CD4-positive, alpha-beta T cell (primary cell): ENCODE measurements at regions of chr13 and their contacts with region 1.

Region 1: GRCh38 chr13:27171827-27172494 is 350 bp upstream of the USP12 start:
- DNase-seq: peak; percentile 81 to 97 (median 92)
- ATAC-seq: peak; percentile 83
- H3K4me3 ChIP-seq: peak overlapping the region; percentile 73
- H3K4me3 Mint-ChIP-seq: peak overlapping the region; percentile 87
- H3K27ac ChIP-seq: peak overlapping the region; percentile 89
- H3K27ac Mint-ChIP-seq: peak overlapping the region; percentile 91
- H3K4me1 ChIP-seq: peaks cover 36% of the 10 kb centered on the region
- H3K4me1 Mint-ChIP-seq: peaks cover 45% of the 10 kb centered on the region
- H3K27me3 ChIP-seq: no peaks in the 10 kb centered on the region
- H3K27me3 Mint-ChIP-seq: no peaks in the 10 kb centered on the region
- CTCF ChIP-seq: peak; percentile 16

Region 2: DNA sequence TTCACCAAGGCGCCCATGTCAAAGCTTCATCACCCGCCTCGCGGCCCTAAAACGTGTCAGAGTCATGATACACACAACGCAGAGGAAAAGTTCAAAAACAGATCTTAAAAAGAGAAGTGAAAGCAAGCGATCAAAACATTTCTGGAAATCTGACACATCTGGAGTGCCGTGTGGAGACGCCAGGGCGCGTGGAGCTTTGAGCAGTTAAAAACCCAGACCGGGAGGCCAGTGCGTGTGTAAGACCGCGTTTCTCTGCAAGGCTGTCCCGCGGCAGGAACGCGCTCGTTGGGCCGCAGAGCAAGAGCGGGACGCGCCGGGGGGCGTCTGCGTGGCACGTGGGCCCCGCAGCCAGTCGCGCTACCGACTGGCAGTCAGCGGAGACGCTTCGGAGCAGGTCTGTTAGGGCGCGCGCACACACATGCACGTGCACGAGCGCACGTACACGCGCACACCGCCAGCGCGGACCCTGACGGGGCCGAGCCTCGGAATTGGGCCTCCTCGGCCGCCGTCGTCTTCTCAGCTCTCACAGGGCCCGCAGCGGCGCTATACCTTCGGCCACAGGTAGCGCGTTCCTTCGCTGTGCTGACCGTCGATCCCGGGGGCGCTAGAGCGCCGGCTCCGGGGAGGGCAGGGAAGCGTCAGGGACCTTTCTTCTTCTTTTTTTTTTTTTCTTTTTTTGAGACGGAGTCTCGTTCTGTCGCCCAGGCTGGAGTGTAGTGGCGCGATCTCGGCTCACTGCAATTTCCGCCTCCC is 985.7 kb before region 1 on chr13:
- CTCF ChIA-PET with region 1: no interaction called
- POLR2A ChIA-PET with region 1: no interaction called
- intact Hi-C with region 1: loop called in 1 of 2 experiments (anchors 10 kb)
- DNase-seq: peak; percentile 83 to 97 (median 88)
- ATAC-seq: peak; percentile 83
- H3K4me3 ChIP-seq: peak overlapping the region; percentile 88
- H3K4me3 Mint-ChIP-seq: peak overlapping the region; percentile 87
- H3K27ac ChIP-seq: peak overlapping the region; percentile 55 to 60
- H3K27ac Mint-ChIP-seq: peak overlapping the region; percentile 92
- H3K4me1 ChIP-seq: peaks cover 26% of the 10 kb centered on the region
- H3K4me1 Mint-ChIP-seq: peaks cover 23% of the 10 kb centered on the region
- H3K27me3 ChIP-seq: no peaks in the 10 kb centered on the region
- H3K27me3 Mint-ChIP-seq: no peaks in the 10 kb centered on the region
- CTCF ChIP-seq: peak; percentile 40

Region 3: GRCh38 chr13:27006519-27007161 is 165.3 kb before region 1 on chr13:
- CTCF ChIA-PET with region 1: no interaction called
- POLR2A ChIA-PET with region 1: no interaction called
- intact Hi-C with region 1: no loop called
- DNase-seq: no peak
- ATAC-seq: no peak
- H3K4me3 ChIP-seq: no peak overlapping the region
- H3K4me3 Mint-ChIP-seq: no peak overlapping the region
- H3K27ac ChIP-seq: no peak overlapping the region
- H3K27ac Mint-ChIP-seq: no peak overlapping the region
- H3K4me1 ChIP-seq: peaks cover 3% of the 10 kb centered on the region
- H3K4me1 Mint-ChIP-seq: no peaks in the 10 kb centered on the region
- H3K27me3 ChIP-seq: peaks cover 20 to 26% of the 10 kb centered on the region in 2 experiments
- H3K27me3 Mint-ChIP-seq: peaks cover 65% of the 10 kb centered on the region
- CTCF ChIP-seq: no peak

Region 4: DNA sequence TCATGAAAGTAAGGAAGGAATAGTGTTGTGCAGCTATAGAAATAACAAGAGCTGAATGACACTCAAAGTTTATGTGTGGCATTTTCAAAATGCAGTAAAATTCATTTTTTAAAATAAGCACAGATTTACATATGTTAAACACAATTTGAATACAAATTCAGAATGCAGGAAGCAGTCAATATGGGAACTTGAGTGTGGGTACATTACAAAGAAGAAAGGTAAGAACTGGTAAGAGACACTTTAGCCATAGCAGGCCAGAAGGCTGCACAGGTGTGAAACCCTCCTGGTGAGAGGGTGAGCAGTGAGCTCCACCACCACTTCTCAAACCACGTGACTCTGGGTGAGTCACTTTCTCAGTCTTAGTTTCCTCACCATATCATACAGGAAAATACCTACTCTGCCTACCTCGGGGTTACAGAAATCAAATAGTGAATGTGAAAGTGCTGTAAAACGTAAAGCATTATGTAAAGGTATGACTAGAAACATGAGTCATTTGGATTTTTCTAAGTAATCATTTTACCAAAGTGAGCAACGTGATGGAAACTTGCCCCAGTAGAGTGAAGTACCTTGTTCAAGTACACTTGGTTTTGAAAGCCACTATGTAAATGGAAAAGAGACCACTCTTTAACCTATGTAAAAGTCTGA is 40.9 kb before region 1 on chr13:
- CTCF ChIA-PET with region 1: no interaction called
- POLR2A ChIA-PET with region 1: interaction called, 3 read pairs
- intact Hi-C with region 1: loop called in 1 of 2 experiments (anchors 5 kb)
- DNase-seq: peak in 13 of 14 experiments; percentile 15 to 87 (median 45)
- ATAC-seq: peak; percentile 89
- H3K4me3 ChIP-seq: no peak overlapping the region
- H3K4me3 Mint-ChIP-seq: peak overlapping the region; percentile 53
- H3K27ac ChIP-seq: peak overlapping the region in 1 of 2 donors; percentile 60
- H3K27ac Mint-ChIP-seq: peak overlapping the region; percentile 72
- H3K4me1 ChIP-seq: peaks cover 27% of the 10 kb centered on the region
- H3K4me1 Mint-ChIP-seq: peaks cover 82% of the 10 kb centered on the region
- H3K27me3 ChIP-seq: no peaks in the 10 kb centered on the region
- H3K27me3 Mint-ChIP-seq: no peaks in the 10 kb centered on the region
- CTCF ChIP-seq: no peak

Region 5: DNA sequence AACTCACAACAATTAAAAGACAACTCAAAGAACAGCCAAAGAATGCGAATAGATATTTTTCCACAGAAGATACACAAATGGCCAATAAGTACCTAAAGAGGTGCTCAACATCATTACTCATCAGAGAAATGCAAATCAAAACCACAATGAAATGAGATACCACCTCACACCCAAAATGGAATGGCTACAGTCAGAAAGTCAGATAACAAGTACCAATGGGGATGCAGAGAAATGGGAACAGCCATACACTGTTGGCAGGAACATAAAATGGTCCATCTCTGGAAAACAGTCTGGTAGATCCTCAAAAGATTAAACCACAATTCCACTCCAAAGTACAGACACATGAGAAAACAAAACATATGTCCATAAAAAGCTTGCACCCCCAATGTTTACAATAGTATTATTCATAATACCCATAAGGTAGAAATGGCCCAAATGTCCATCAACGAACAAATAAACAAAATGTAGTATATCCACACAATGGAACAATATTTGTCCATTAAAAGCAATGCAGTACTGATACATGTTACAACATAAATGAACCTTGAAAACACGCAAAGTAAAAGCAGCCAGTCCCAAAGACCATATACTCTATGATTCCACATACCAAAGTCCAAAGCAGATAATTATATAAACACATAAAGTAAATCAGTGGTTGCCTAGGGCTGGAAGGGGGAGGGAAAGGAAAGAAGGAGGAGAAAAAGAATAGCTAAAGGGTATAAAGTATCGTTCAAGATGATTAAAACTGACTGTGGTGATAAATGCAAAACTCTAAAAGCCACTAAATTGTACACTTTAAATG is 20.0 kb before region 1 on chr13:
- CTCF ChIA-PET with region 1: no interaction called
- POLR2A ChIA-PET with region 1: no interaction called
- intact Hi-C with region 1: no loop called
- DNase-seq: no peak
- ATAC-seq: no peak
- H3K4me3 ChIP-seq: no peak overlapping the region
- H3K4me3 Mint-ChIP-seq: peak overlapping the region; percentile 28
- H3K27ac ChIP-seq: no peak overlapping the region
- H3K27ac Mint-ChIP-seq: no peak overlapping the region
- H3K4me1 ChIP-seq: peaks cover 8% of the 10 kb centered on the region
- H3K4me1 Mint-ChIP-seq: peaks cover 73% of the 10 kb centered on the region
- H3K27me3 ChIP-seq: no peaks in the 10 kb centered on the region
- H3K27me3 Mint-ChIP-seq: no peaks in the 10 kb centered on the region
- CTCF ChIP-seq: no peak

Region 6: GRCh38 chr13:27362064-27362883 is 190.3 kb after region 1 on chr13:
- CTCF ChIA-PET with region 1: no interaction called
- POLR2A ChIA-PET with region 1: interaction called, 3 read pairs
- intact Hi-C with region 1: loop called (anchors 5 to 10 kb)
- DNase-seq: peak; percentile 58 to 86 (median 70)
- ATAC-seq: peak; percentile 90
- H3K4me3 ChIP-seq: peak overlapping the region; percentile 33
- H3K4me3 Mint-ChIP-seq: peak overlapping the region; percentile 58
- H3K27ac ChIP-seq: no peak overlapping the region
- H3K27ac Mint-ChIP-seq: no peak overlapping the region
- H3K4me1 ChIP-seq: peaks cover 10% of the 10 kb centered on the region
- H3K4me1 Mint-ChIP-seq: peaks cover 4% of the 10 kb centered on the region
- H3K27me3 ChIP-seq: peaks cover 6 to 20% of the 10 kb centered on the region in 2 experiments
- H3K27me3 Mint-ChIP-seq: peaks cover 38% of the 10 kb centered on the region
- CTCF ChIP-seq: peak; percentile 86

Region 7: GRCh38 chr13:27620377-27621115 is 448.6 kb after region 1 on chr13 and contains the start of gene LNX2:
- CTCF ChIA-PET with region 1: no interaction called
- POLR2A ChIA-PET with region 1: interaction called, 5 read pairs
- intact Hi-C with region 1: loop called in 1 of 2 experiments (anchors 5 kb)
- DNase-seq: peak; percentile 92 to 98 (median 96)
- ATAC-seq: peak; percentile 83
- H3K4me3 ChIP-seq: peak within 1 kb of the TSS; percentile 77
- H3K4me3 Mint-ChIP-seq: peak within 1 kb of the TSS; percentile 98
- H3K27ac ChIP-seq: peak within 1 kb of the TSS; percentile 97 to 98
- H3K27ac Mint-ChIP-seq: peak within 1 kb of the TSS; percentile 99
- H3K4me1 ChIP-seq: peaks cover 40% of the 10 kb centered on the region
- H3K4me1 Mint-ChIP-seq: peaks cover 72% of the 10 kb centered on the region
- H3K27me3 ChIP-seq: no peaks in the 10 kb centered on the region
- H3K27me3 Mint-ChIP-seq: no peaks in the 10 kb centered on the region
- CTCF ChIP-seq: no peak
- total RNA-seq, gene LNX2: 3.5 to 3.9 TPM

Region 8: GRCh38 chr13:28718543-28719226 is 1546.7 kb after region 1 on chr13 and contains the start of gene SLC46A3:
- CTCF ChIA-PET with region 1: no interaction called
- POLR2A ChIA-PET with region 1: no interaction called
- intact Hi-C with region 1: loop called in 1 of 2 experiments (anchors 10 kb)
- DNase-seq: peak; percentile 94 to 98 (median 97)
- ATAC-seq: peak; percentile 98
- H3K4me3 ChIP-seq: peak within 1 kb of the TSS; percentile 95
- H3K4me3 Mint-ChIP-seq: peak within 1 kb of the TSS; percentile 94
- H3K27ac ChIP-seq: peak within 1 kb of the TSS; percentile 74 to 76
- H3K27ac Mint-ChIP-seq: peak within 1 kb of the TSS; percentile 88
- H3K4me1 ChIP-seq: peaks cover 24% of the 10 kb centered on the region
- H3K4me1 Mint-ChIP-seq: peaks cover 34% of the 10 kb centered on the region
- H3K27me3 ChIP-seq: no peaks in the 10 kb centered on the region
- H3K27me3 Mint-ChIP-seq: no peaks in the 10 kb centered on the region
- CTCF ChIP-seq: no peak
- total RNA-seq, gene SLC46A3: 6.3 to 7.4 TPM